Mucosa of descending colon (tissue), 3 donors: ENCODE measurements at regions of chr11 and their contacts with region 1.

Region 1: DNA sequence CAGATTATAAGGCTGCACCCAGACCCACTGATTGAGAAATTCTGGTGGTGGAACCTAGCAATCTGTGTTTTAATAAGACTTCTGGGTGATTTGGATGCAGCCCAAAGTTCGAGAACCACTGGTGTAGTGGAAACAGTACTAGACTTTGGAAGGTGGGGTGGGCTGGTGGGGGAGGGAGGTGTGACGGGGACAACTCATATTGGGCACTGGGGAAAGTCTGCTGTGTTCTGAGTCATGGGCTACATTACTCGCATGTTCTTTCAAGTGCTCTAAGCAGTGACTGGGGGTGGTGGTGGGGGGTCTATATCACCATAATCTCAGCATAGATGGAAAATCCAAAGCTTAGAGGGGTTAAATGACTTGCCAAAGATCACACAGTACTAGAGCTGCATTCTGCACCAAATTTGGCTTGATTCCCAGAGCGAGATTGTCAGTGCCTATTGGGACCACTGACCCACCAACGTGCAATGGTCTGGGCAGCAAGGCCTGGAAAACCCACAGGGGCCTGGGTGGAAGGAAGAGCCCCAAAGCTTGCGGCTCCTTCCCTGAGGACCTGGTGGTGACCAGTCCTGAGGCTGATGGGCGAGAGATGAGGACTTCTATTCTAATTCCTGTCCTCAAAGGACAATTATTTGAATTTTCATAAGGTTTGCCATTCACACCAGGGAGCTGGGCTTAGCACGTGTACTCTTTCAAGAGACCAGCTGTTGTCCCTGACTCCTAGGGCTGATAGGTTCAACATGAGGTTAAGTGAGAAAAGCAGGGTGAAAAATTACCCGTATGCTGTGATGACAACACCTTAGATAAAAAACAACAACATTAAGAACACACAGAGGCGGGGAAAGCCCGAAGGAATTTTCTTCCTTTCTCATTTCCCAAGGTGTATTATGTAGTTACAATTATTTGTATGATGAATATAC is 77.5 kb upstream of the NARS2 start:
- DNase-seq: no peak
- ATAC-seq: no peak
- H3K4me3 ChIP-seq: no peak overlapping the region
- H3K4me1 ChIP-seq: no peaks in the 10 kb centered on the region
- CTCF ChIP-seq: no peak

Region 2: DNA sequence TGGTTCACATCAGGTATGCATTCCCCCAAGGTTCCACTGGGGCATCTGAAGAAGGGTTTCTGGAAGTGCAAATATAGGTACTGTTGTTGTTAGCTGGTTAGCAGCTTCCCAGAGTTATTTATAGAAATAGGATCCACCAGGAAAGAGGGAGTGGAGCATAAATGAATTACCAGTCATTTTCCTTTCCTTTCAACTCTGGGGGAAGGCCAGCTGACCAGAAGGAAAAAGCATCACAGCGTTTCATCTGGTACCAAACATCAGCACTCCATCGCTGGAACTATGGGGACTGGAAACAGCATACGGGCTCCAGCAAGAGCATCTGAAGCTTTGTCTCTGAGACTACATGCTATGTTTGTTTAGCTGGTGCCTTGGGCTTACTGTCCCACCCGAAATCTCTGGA is 300.7 kb after region 1 on chr11:
- intact Hi-C with region 1: loop called in 1 of 2 experiments (anchors 5 kb)
- DNase-seq: no peak
- ATAC-seq: no peak
- H3K4me3 ChIP-seq: no peak overlapping the region
- H3K4me1 ChIP-seq: no peaks in the 10 kb centered on the region
- CTCF ChIP-seq: no peak